BJ (cell line): ENCODE measurements at regions of chr5 and their contacts with region 1.

Region 1: DNA sequence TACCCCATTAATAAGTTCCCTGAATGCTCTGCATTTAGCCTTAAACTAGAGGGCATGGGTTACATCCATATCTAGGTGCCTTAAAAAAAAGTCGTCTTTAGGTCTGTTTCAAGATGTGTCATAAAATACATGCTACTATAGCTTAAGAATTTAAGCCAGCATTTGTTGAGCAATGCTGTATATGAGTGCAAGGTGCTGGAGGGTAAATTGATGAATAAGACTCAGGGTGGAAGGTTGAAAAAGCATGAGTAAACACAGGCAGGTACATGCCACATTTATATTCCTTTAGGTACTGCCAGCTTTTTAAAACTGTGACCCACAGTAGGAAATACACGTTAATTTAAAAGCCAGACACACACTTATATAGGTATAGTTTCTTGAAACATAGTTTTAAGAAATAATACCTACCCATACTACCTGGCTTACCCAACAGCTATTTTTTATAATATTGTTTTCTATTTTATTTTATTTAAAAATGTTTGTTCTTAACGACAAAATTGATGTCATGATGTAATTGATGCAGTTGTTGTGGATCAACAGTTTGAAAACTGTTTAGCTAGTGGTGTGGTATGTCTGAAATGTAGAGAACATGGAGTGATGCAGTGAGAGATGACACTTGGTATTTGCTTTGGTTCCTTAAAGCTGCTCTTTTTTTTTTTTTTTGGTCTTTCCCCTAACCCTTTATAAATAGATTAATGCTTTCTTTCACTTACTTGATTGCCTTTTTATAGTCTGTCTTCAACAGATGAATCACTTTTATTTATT is 3.9 kb downstream of the HMGCR start:
- DNase-seq: no peak
- H3K4me3 ChIP-seq: no peak overlapping the region
- H3K27me3 ChIP-seq: no peaks in the 10 kb centered on the region
- CTCF ChIP-seq: no peak

Region 2: GRCh38 chr5:73770172-73771025 is 1570.5 kb before region 1 on chr5:
- CTCF ChIA-PET with region 1: no interaction called
- POLR2A ChIA-PET with region 1: interaction called, 13 read pairs
- DNase-seq: no peak
- H3K4me3 ChIP-seq: no peak overlapping the region
- H3K27me3 ChIP-seq: no peaks in the 10 kb centered on the region
- CTCF ChIP-seq: no peak

Region 3: GRCh38 chr5:75202935-75203334 is 138.0 kb before region 1 on chr5:
- CTCF ChIA-PET with region 1: no interaction called
- POLR2A ChIA-PET with region 1: no interaction called
- DNase-seq: no peak
- H3K4me3 ChIP-seq: no peak overlapping the region
- H3K27me3 ChIP-seq: no peaks in the 10 kb centered on the region; the same call in 1 of the 2 replicates
- CTCF ChIP-seq: no peak